ENCODE measurements at regions of chr12 and their contacts with region 1.

Region 1: DNA sequence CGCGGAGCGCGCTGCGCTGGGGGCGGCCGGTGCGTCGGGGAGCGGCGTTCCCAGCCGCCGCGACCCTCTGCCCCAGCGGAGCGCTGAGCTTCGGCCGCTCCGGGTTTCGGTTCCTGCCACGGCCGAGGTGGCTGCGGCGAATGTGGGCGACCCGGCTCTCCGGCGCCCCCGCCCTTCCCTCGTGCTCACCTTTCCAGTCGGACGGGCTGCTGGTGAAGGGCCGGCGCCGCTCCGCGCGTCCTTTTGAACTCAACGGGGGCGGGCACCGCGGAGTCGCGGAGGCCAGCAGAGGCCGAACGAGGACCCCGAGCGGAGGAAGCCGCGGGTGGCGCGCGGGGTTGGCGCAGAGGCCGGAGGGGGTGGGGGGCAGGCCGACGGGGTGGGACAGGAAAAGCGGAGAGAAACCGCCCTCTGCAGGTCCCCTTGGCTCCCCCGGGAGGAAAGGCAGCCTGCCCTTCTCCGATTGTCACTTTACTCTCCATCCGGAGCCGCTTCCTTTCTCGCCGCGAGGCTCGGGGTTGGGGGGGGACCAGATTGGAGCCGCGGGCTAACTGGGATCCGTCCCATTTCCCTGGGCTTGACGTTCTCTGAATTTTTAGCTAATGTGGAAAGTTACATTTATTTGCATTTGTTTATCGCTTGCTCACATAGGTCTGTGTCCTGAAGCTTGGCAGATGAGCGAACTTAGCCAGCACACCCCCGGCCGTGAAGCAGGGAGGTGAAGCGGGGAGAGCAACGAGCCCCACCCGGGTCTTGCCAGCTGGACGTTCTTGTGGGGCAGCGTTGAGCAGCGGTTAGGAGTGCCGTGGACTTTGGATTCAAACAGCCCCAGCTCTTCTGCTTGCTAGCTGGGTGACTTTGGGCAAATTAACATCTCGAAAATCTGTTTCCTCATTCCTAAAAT is at the start of gene SMAGP:
- DNase-seq: peak; percentile 70
- H3K4me3 Mint-ChIP-seq: peak within 1 kb of the TSS; percentile 90
- H3K27ac Mint-ChIP-seq: peak within 1 kb of the TSS; percentile 42
- H3K4me1 Mint-ChIP-seq: peaks cover 23% of the 10 kb centered on the region
- H3K27me3 Mint-ChIP-seq: peaks cover 41% of the 10 kb centered on the region

Region 2: DNA sequence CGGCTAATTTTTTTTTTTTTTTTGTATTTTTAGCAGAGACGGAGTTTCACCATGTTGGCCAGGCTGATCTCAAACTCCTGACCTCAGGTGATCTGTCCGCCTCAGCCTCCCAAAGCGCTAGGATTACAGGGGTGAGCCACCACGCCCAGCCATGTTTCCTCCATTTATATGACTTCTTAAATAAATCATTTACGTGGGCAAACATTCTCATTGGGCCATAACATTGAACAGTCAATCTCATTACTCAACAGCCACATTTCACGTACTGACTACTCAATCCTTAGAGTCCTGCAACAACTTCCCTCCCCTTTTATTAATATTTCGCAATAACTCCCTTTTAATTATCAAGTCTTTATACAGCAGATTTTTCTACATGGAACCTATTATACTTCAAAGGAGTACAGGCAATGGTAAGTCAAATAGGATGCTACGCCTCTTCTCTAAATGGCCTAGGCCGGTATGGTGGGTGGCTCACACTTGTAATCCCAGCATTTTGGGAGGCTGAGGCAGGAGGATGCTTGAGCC is 179.6 kb before region 1 on chr12:
- CTCF ChIA-PET with region 1: no interaction called
- DNase-seq: no peak
- H3K4me3 Mint-ChIP-seq: no peak overlapping the region
- H3K27ac Mint-ChIP-seq: no peak overlapping the region
- H3K4me1 Mint-ChIP-seq: peaks cover 15% of the 10 kb centered on the region
- H3K27me3 Mint-ChIP-seq: no peaks in the 10 kb centered on the region

Region 3: GRCh38 chr12:51351913-51352532 is 81.7 kb after region 1 on chr12:
- CTCF ChIA-PET with region 1: interaction called, 17 read pairs
- DNase-seq: peak; percentile 66
- H3K4me3 Mint-ChIP-seq: no peak overlapping the region
- H3K27ac Mint-ChIP-seq: no peak overlapping the region
- H3K4me1 Mint-ChIP-seq: no peaks in the 10 kb centered on the region
- H3K27me3 Mint-ChIP-seq: peaks cover 22% of the 10 kb centered on the region